Mucosa of descending colon (tissue), 3 donors: ENCODE measurements at regions of chr7 and their contacts with region 1.

Region 1: GRCh38 chr7:100691676-100692577 is 2.1 kb downstream of the GIGYF1 start:
- DNase-seq: peak; percentile 75 to 86 (median 84)
- ATAC-seq: peak; percentile 83
- H3K4me3 ChIP-seq: no peak overlapping the region
- H3K4me1 ChIP-seq: peaks cover 18% of the 10 kb centered on the region
- CTCF ChIP-seq: peak; percentile 93

Region 2: DNA sequence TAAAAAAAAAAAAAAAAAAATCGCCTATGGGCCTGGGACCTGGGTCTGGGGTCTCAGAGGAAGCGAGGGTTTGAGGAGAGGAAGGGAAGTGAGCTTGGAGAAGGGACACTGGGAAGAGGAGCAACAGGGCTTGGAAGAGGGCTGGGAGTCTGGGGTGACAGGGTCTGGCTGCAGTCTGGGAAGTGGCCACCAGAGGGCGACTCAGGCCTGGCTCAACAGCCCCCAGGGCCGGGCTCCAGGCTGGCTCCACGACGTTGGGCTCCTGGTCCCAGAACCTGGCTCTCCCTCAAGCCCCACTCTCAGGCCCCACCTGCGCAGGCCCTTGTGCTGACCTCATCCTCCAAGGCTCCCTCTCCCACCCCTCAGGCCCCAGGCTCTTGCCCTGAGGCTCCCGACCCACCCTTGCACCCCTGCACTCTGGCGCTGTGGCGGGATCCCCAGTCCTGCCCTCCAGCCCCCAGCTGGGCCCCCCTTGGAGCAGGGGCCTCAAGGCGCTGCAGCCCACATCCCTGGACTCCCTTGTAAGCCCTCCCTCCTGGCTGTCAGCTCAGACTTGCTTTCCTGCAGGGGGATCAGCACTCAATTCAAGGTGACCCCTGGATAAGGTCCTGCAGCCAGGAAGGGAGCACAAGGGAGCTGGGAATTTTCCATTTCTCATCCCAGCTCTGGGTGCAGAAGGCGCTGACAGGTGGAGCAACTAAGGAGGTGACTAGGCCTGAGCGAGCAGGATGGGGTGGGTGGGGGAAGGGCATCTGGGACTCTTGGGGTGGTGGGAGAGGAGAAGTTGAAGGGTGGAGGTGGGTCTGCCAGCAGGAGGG is 222.5 kb before region 1 on chr7:
- intact Hi-C with region 1: loop called (anchors 5 to 10 kb)
- DNase-seq: peak; percentile 87 to 94 (median 93)
- ATAC-seq: peak; percentile 92
- H3K4me3 ChIP-seq: no peak overlapping the region
- H3K4me1 ChIP-seq: peaks cover 17% of the 10 kb centered on the region
- CTCF ChIP-seq: peak; percentile 92

Region 3: DNA sequence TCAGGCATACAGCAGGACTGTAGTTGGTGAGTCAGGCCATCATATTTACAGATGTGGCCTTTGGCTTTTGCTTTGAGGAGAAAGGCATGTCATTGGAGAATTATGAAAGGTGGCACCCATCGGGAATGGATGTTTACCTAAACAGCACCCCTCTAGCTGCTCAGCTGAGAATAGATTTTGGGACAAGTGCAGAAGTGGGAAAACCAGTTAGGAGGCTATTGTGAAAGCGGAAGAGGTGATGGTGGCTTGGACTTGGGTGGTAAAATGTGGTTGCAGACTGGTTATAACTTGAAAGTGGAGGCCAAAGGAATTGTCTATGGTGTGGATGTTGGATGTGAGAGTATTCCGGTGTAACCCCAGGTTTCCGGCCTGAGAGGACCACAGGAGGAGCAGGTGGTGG is 155.4 kb after region 1 on chr7:
- intact Hi-C with region 1: no loop called
- DNase-seq: no peak
- ATAC-seq: no peak
- H3K4me3 ChIP-seq: no peak overlapping the region
- H3K4me1 ChIP-seq: peaks cover 7% of the 10 kb centered on the region
- CTCF ChIP-seq: no peak